B cell (primary cell): ENCODE measurements at regions of chr1 and their contacts with region 1.

Region 1: DNA sequence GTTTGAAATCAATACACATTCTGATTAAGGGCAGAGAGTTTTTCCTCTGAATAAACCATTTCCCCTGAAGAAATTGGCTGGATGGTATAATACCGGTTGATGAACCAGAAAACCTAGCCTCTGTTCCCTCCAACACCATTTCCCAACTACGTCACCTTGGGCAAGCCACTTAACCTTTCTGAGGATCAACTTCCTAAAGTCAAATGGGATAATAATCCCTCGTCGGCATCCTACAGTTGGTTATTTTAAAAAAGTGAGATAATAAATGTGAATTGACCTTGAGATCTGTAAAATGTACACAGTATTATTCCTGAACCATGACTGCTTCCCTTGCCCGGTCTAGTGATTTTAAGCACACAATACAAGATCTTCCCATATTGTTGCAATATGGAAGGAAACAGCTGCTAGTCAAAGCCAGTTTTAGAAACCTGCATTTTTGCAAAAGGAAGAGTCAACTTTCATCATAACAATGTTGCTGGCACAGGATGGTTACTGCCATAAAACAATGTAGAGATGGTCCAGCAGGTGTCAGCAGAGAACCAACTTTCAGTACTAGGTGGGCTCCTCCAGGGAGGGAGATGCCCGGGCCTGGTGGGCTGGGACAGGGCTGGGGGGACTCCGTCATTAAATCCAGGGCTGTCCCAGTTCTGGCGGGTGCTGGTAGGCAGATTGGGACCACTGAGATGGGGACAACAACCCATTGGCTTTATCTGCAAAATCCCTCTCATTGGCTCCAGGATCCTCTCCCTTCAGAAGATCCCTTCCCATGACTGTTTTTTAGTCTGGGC is 5.2 kb upstream of the HLX start:
- DNase-seq: peak; percentile 74
- ATAC-seq: peak; percentile 22
- H3K4me3 ChIP-seq: no peak overlapping the region
- H3K4me3 Mint-ChIP-seq: no peak overlapping the region
- H3K27ac ChIP-seq: no peak overlapping the region
- H3K27ac Mint-ChIP-seq: no peak overlapping the region
- H3K4me1 ChIP-seq: peaks cover 26 to 36% of the 10 kb centered on the region in 2 donors
- H3K4me1 Mint-ChIP-seq: peaks cover 36% of the 10 kb centered on the region
- H3K27me3 ChIP-seq: peaks cover 0 to 30% (median 11%) of the 10 kb centered on the region in 4 experiments
- H3K27me3 Mint-ChIP-seq: peaks cover 11% of the 10 kb centered on the region
- CTCF ChIP-seq: peak; percentile 80

Region 2: DNA sequence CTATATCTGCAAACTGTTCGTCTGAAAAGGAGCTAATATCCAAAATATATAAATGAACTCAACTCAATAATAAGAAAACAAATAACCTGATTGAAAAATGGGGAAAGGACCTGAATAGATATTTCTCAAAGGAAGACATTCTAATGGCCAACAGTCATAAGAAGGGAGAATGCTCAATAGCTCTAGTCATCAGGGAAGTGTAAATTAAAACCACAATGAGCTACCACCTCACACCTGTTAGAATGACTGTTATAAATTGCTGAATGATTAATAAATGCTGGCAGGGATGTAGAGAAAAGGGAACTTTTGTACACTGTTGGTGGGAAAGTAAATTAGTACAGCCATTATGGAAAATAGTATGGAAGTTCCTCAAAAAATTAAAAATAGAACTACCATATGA is 205.1 kb before region 1 on chr1:
- CTCF ChIA-PET with region 1: no interaction called
- POLR2A ChIA-PET with region 1: no interaction called
- intact Hi-C with region 1: no loop called
- DNase-seq: no peak
- ATAC-seq: no peak
- H3K4me3 ChIP-seq: no peak overlapping the region
- H3K4me3 Mint-ChIP-seq: no peak overlapping the region
- H3K27ac ChIP-seq: no peak overlapping the region
- H3K27ac Mint-ChIP-seq: no peak overlapping the region
- H3K4me1 ChIP-seq: no peaks in the 10 kb centered on the region
- H3K4me1 Mint-ChIP-seq: no peaks in the 10 kb centered on the region
- H3K27me3 ChIP-seq: no peaks in the 10 kb centered on the region
- H3K27me3 Mint-ChIP-seq: peaks cover 18% of the 10 kb centered on the region
- CTCF ChIP-seq: no peak

Region 3: DNA sequence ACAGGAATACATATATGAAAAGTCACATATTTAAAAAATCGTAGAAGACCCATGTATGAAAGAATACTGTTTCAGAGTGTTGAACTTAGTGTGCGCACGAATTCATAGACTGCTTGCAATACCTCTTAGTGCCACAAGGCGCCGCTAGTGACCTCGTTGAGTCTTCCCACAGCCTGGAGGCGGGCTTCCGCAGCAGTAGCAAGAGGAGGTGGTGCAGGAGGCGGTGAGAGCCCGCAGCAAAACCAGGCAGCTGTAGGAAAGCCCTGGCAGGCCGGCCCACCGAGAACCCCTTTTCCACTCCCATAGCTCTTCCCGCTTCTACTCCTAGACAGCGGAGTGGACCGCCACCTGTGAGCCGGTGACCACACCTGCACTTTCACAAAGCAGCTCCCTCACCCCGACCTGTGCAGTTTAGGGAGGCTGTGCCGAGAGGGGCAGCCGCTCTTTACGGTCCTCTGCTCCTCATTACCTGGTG is 63.8 kb before region 1 on chr1:
- CTCF ChIA-PET with region 1: interaction called, 8 read pairs
- POLR2A ChIA-PET with region 1: no interaction called
- intact Hi-C with region 1: loop called (anchors 1 kb)
- DNase-seq: peak; percentile 83
- ATAC-seq: peak; percentile 98
- H3K4me3 ChIP-seq: peak overlapping the region in 1 of 5 experiments; percentile 13
- H3K4me3 Mint-ChIP-seq: peak overlapping the region; percentile 70
- H3K27ac ChIP-seq: no peak overlapping the region
- H3K27ac Mint-ChIP-seq: no peak overlapping the region
- H3K4me1 ChIP-seq: peaks cover 0 to 5% of the 10 kb centered on the region in 2 donors
- H3K4me1 Mint-ChIP-seq: peaks cover 6% of the 10 kb centered on the region
- H3K27me3 ChIP-seq: peaks cover 0 to 9% (median 2%) of the 10 kb centered on the region in 4 experiments
- H3K27me3 Mint-ChIP-seq: peaks cover 7% of the 10 kb centered on the region
- CTCF ChIP-seq: peak; percentile 99

Region 4: GRCh38 chr1:220943319-220943996 is 69.4 kb after region 1 on chr1:
- CTCF ChIA-PET with region 1: no interaction called
- POLR2A ChIA-PET with region 1: no interaction called
- intact Hi-C with region 1: no loop called
- DNase-seq: no peak
- ATAC-seq: no peak
- H3K4me3 ChIP-seq: no peak overlapping the region
- H3K4me3 Mint-ChIP-seq: no peak overlapping the region
- H3K27ac ChIP-seq: no peak overlapping the region
- H3K27ac Mint-ChIP-seq: no peak overlapping the region
- H3K4me1 ChIP-seq: no peaks in the 10 kb centered on the region
- H3K4me1 Mint-ChIP-seq: peaks cover 9% of the 10 kb centered on the region
- H3K27me3 ChIP-seq: no peaks in the 10 kb centered on the region
- H3K27me3 Mint-ChIP-seq: peaks cover 14% of the 10 kb centered on the region
- CTCF ChIP-seq: no peak

Region 5: DNA sequence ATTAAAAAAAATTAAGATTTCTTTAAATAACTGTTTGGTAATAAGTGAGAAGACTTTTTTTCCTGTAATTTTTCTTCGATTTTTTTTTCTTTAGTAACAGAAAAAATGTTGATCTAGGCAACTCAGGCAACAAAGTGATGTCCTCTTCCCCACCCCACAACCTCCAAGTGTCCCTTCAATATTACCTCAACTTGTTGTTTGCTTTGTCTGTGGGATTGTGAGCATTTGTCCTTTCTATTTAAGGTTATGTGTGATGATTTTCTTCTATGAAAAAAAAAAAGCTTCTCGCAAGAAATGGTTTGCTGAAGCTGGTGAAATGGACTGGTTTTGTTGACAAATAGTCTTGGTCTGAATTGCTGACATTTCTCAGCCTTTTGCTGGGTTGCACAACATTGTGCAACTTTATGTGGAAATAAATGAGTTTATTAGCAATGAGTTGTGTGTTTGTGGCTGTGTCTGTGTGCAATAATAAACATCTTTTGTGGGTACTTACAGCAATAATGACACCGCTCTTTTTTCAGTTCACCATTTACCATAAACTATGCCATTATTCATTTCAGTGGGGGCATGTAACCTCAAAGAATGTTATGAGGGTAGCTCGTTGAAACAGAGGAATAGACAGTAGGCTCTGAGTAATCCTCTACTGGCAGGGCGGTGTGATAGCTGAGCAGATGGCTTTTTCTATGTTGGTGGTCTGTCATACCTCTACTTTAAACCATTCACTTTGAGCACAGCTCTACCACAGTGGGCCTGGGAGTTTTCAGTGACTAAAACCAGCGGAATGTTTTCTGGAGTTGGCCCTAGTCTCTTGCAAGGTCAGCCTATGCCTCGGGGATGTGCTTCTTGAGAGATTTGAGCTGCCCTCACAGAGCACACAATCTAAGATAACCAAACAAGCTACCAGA is 223.7 kb after region 1 on chr1:
- CTCF ChIA-PET with region 1: interaction called, 43 read pairs
- POLR2A ChIA-PET with region 1: no interaction called
- intact Hi-C with region 1: loop called (anchors 1 kb)
- DNase-seq: no peak
- ATAC-seq: no peak
- H3K4me3 ChIP-seq: no peak overlapping the region
- H3K4me3 Mint-ChIP-seq: no peak overlapping the region
- H3K27ac ChIP-seq: no peak overlapping the region
- H3K27ac Mint-ChIP-seq: no peak overlapping the region
- H3K4me1 ChIP-seq: peaks cover 17 to 19% of the 10 kb centered on the region in 2 donors
- H3K4me1 Mint-ChIP-seq: peaks cover 25% of the 10 kb centered on the region
- H3K27me3 ChIP-seq: no peaks in the 10 kb centered on the region
- H3K27me3 Mint-ChIP-seq: no peaks in the 10 kb centered on the region
- CTCF ChIP-seq: no peak

Region 6: DNA sequence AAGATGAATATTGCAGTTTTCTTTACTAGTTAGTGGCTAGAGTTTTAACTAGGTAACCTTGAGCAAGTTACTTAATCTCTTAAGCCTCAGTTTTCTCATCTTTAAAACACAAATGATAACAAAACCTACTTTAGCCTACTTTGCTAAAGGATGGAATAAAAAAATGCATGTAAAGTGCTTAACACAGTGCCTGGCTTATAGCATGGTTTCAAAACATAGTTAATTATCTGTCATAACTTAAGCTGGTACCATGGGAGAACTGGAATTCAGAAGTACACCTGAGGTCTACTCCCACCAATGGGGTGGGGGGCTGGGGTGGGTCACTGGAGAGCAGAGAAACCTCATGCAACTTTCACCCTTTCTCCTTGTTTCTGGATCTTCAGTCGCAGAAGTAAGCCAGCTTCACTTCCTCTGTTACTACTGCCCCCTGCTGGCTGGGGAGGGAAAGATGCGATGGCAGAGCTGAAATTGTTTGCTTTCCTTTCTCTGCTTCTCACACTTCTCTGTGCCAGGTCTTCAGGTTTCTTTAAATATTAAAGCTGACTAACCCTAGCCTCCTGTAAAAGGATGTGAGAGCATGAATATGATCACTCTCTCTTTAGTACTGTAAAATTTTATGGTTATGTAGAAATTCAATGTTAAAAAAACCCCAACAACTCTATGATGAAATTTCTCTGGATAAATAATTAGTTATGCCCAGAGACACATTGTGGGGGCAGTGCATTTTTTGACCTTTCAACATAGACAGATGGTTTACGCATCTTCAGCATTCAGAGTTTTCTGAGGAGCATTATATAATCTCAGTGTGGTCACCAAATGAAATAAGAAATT is 329.4 kb after region 1 on chr1:
- CTCF ChIA-PET with region 1: interaction called, 259 read pairs
- POLR2A ChIA-PET with region 1: interaction called, 3 read pairs
- intact Hi-C with region 1: loop called (anchors 1 kb)
- DNase-seq: peak; percentile 82
- ATAC-seq: peak; percentile 66
- H3K4me3 ChIP-seq: no peak overlapping the region
- H3K4me3 Mint-ChIP-seq: no peak overlapping the region
- H3K27ac ChIP-seq: no peak overlapping the region
- H3K27ac Mint-ChIP-seq: no peak overlapping the region
- H3K4me1 ChIP-seq: peaks cover 3% of the 10 kb centered on the region in 2 donors
- H3K4me1 Mint-ChIP-seq: peaks cover 3% of the 10 kb centered on the region
- H3K27me3 ChIP-seq: peaks cover 0 to 4% (median 2%) of the 10 kb centered on the region in 4 experiments
- H3K27me3 Mint-ChIP-seq: peaks cover 18% of the 10 kb centered on the region
- CTCF ChIP-seq: peak; percentile 98

Region 7: DNA sequence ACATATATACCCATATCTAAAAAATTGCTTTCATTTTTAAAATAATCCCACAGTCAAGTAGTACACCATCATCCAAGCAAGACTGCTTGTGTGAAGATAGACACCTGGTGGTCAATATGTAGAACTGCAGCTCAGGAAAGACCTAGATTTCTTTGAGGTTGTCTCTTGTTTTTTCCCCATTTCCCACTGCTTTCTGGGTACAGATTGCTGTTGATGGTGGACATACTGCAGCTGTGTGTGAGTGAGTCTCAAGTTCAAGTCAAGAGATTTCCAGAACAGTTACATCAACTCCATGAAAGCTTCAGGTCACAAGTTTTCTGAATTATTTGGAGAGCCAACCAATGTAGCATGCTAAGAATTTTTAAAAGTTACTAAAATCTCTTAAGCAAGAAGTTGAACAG is 561.4 kb after region 1 on chr1:
- CTCF ChIA-PET with region 1: interaction called, 114 read pairs
- POLR2A ChIA-PET with region 1: no interaction called
- intact Hi-C with region 1: loop called (anchors 1 kb)
- DNase-seq: peak; percentile 62
- ATAC-seq: peak; percentile 56
- H3K4me3 ChIP-seq: no peak overlapping the region
- H3K4me3 Mint-ChIP-seq: no peak overlapping the region
- H3K27ac ChIP-seq: no peak overlapping the region
- H3K27ac Mint-ChIP-seq: no peak overlapping the region
- H3K4me1 ChIP-seq: peaks cover 10 to 11% of the 10 kb centered on the region in 2 donors
- H3K4me1 Mint-ChIP-seq: peaks cover 18% of the 10 kb centered on the region
- H3K27me3 ChIP-seq: no peaks in the 10 kb centered on the region
- H3K27me3 Mint-ChIP-seq: peaks cover 9% of the 10 kb centered on the region
- CTCF ChIP-seq: peak; percentile 96